ENCODE measurements at regions of chr22 and their contacts with region 1.

Region 1: GRCh38 chr22:19398206-19398605 is 33.3 kb downstream of the HIRA start:
- DNase-seq: no peak
- ATAC-seq: peak in 2 of 4 donors; percentile 24 to 31
- H3K4me3 ChIP-seq: no peak overlapping the region
- H3K27ac ChIP-seq: no peak overlapping the region
- H3K4me1 ChIP-seq: peaks cover 0 to 5% (median 0%) of the 10 kb centered on the region in 12 donors
- H3K27me3 ChIP-seq: no peaks in the 10 kb centered on the region
- CTCF ChIP-seq: no peak
- POLR2A ChIP-seq: no peak

Region 2: DNA sequence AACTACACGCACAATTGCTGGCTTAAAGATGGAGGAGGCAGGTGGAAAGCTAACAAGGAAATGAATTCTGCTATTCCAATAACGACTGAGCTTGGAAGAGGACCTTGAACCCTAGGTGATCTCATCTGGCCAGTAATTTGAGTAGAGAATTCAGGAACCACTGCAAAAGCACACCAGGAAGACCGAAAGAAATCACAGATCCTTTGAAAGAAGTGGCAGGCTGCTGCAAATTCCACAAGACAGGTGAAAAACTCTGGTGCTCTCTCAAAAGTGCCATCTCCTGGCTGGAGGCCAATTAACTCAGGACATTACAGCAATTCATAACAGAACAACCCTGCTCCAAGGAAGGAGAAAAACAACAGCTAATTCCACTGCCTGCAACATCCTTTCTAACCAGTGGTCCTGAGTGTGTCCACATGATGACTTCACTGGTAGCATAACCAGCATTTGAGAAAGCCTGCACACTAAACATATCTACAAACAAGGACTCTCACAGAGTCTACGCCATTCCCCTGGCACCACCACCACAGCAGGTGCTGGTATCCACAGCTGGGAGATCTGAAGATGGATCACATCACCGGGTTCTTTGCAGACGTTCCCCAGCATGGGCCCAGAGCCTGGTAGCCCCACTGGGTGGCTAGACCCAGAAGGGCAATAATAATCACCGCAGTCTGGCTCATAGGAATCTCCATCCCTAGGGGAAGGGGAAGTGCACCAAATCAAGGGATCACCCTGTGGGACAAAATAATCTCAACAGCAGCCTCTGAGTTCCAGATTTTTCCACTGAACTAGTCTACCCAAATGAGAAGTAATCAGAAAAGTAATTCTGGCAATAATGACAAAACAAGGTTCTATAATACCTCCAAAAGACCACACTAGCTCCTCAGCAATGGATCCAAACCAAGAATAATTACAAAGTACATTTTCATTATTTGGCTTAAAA is 61.8 kb before region 1 on chr22:
- intact Hi-C with region 1: no loop called
- DNase-seq: no peak
- ATAC-seq: no peak
- H3K4me3 ChIP-seq: no peak overlapping the region
- H3K27ac ChIP-seq: no peak overlapping the region
- H3K4me1 ChIP-seq: no peaks in the 10 kb centered on the region
- H3K27me3 ChIP-seq: no peaks in the 10 kb centered on the region
- CTCF ChIP-seq: no peak
- POLR2A ChIP-seq: no peak

Region 3: DNA sequence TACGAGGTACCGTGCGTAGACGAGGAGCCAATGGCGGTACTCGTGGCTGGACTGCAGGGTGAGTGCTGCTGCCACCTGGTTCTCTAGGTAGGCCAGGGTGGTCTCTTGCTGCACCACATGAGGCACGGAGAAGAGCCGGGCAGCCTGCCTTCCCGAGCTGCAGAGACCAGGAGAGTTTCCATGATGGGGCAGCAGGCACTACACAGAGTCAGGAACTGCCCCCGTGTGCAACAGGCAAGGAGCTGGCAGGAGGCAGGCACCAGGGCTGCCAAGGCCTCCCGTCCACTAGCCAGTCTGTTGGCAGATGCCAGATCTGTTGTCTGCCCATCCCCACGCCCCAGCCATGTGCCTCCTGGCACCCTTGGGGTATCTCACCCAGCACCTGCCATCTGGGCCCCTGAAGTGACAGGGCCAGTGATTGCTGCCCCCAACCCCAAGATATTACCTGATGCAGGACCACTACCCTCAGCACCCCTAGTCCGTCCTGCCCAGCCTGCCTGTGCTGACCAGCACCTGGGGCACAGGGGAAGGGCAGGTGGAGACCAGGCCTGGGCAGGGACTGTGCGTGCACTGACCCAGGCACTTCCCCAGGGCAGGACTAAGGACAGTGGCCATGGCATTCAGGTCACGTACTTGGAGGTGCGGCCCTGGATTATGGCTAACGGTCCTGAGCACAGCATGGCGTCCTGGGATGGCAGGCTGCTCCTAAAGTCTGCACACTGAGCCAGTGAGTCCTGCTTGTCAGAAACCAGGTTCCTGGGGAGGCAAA is 44.7 kb before region 1 on chr22:
- intact Hi-C with region 1: loop called in 1 of 10 experiments (anchors 2 kb)
- DNase-seq: peak in 1 of 5 donors; percentile 15
- ATAC-seq: peak in 2 of 4 donors; percentile 18 to 23
- H3K4me3 ChIP-seq: no peak overlapping the region
- H3K27ac ChIP-seq: no peak overlapping the region
- H3K4me1 ChIP-seq: no peaks in the 10 kb centered on the region
- H3K27me3 ChIP-seq: no peaks in the 10 kb centered on the region
- CTCF ChIP-seq: no peak
- POLR2A ChIP-seq: no peak

Region 4: GRCh38 chr22:19455585-19456370 is 57.6 kb after region 1 on chr22:
- intact Hi-C with region 1: loop called in 1 of 10 experiments (anchors 5 kb)
- DNase-seq: no peak
- ATAC-seq: no peak
- H3K4me3 ChIP-seq: no peak overlapping the region
- H3K27ac ChIP-seq: no peak overlapping the region
- H3K4me1 ChIP-seq: no peaks in the 10 kb centered on the region
- H3K27me3 ChIP-seq: no peaks in the 10 kb centered on the region
- CTCF ChIP-seq: no peak
- POLR2A ChIP-seq: no peak